Mammary epithelial cell (primary cell): ENCODE measurements at regions of chr6 and their contacts with region 1.

Region 1: DNA sequence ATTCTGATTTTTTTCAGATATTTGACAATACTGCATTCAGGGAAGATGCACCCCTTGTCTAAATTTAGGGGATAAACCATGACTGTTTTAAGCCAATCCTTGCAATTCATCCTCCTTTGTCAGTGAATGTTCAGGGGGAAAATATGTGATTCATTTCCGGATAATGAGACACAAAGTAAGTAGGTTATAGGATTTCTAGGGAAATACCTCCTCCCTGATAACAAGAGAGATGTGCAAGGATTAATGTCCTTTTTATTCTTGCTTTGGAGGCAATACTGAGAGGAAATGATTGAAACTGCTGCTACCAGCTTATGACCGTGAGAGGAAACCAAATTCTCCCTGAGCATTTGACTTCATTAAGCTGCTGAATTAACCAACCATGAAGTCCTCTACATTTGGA is 161.3 kb upstream of the EYA4 start:
- DNase-seq: no peak
- H3K4me3 ChIP-seq: no peak overlapping the region
- H3K27ac ChIP-seq: no peak overlapping the region
- H3K4me1 ChIP-seq: no peaks in the 10 kb centered on the region
- H3K27me3 ChIP-seq: no peaks in the 10 kb centered on the region
- CTCF ChIP-seq: no peak

Region 2: DNA sequence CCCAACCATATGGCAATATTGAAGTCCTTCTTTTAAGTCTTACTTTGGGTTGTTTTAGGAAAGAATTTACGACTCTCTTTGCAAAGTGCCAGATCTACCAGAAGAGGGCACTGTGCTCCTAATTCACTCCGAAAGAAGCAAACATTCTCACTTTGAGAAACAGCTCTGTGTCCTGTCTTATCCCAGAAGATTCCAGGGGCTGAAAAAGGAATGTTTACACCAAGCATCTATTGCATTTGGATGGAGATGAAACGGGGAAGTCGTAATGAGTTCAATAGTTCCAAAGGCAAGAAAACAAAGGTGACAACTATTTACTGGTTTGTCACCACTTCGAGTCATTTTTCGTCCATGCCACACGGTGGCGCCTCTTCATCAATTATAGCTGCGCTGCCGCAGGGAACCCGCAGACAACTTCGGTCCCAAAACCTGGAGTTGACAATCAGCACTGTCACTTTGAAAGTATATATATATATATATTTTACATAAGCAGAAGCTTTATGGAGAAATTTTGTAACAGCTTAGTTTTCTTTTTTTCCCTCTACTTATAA is 800.2 kb before region 1 on chr6:
- CTCF ChIA-PET with region 1: no interaction called
- dilution Hi-C with region 1: no loop called
- in situ Hi-C with region 1: no loop called
- intact Hi-C with region 1: no loop called
- DNase-seq: peak; percentile 53
- H3K4me3 ChIP-seq: peak overlapping the region; percentile 35 to 56 (median 53)
- H3K27ac ChIP-seq: no peak overlapping the region
- H3K4me1 ChIP-seq: no peaks in the 10 kb centered on the region
- H3K27me3 ChIP-seq: no peaks in the 10 kb centered on the region
- CTCF ChIP-seq: peak; percentile 76 to 81

Region 3: GRCh38 chr6:132320007-132320406 is 759.9 kb before region 1 on chr6:
- CTCF ChIA-PET with region 1: no interaction called
- dilution Hi-C with region 1: no loop called
- in situ Hi-C with region 1: no loop called
- intact Hi-C with region 1: no loop called
- DNase-seq: peak; percentile 30
- H3K4me3 ChIP-seq: no peak overlapping the region
- H3K27ac ChIP-seq: no peak overlapping the region
- H3K4me1 ChIP-seq: no peaks in the 10 kb centered on the region
- H3K27me3 ChIP-seq: no peaks in the 10 kb centered on the region
- CTCF ChIP-seq: no peak

Region 4: DNA sequence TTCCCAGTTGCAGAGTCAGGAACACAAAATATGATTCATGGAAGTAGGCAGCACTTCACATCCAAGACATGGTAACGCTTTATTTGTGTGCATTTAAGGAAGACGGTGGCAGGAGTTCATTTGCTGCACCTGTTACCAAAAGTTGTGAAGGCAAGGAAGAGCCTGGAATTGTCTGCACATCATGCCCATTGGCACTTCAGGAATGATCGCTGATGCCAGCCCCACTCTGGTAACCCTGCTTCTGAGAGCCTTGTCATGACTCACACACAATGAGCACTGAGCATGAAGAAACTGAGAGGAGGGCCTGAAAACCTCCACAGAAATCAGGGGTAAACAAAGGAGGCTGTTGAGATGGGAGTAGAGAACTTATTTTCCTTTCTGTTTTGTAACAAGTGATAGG is 84.5 kb before region 1 on chr6:
- CTCF ChIA-PET with region 1: no interaction called
- dilution Hi-C with region 1: loop called (anchors 5 kb)
- in situ Hi-C with region 1: no loop called
- intact Hi-C with region 1: no loop called
- DNase-seq: no peak
- H3K4me3 ChIP-seq: no peak overlapping the region
- H3K27ac ChIP-seq: no peak overlapping the region
- H3K4me1 ChIP-seq: no peaks in the 10 kb centered on the region
- H3K27me3 ChIP-seq: peaks cover 3% of the 10 kb centered on the region
- CTCF ChIP-seq: no peak

Region 5: GRCh38 chr6:133062077-133062476 is 17.8 kb before region 1 on chr6:
- CTCF ChIA-PET with region 1: no interaction called
- dilution Hi-C with region 1: no loop called
- in situ Hi-C with region 1: no loop called
- intact Hi-C with region 1: no loop called
- DNase-seq: no peak
- H3K4me3 ChIP-seq: no peak overlapping the region
- H3K27ac ChIP-seq: no peak overlapping the region
- H3K4me1 ChIP-seq: no peaks in the 10 kb centered on the region
- H3K27me3 ChIP-seq: peaks cover 4% of the 10 kb centered on the region
- CTCF ChIP-seq: no peak

Region 6: GRCh38 chr6:133341607-133342158 is 261.8 kb after region 1 on chr6:
- CTCF ChIA-PET with region 1: no interaction called
- dilution Hi-C with region 1: no loop called
- in situ Hi-C with region 1: no loop called
- intact Hi-C with region 1: no loop called
- DNase-seq: no peak
- H3K4me3 ChIP-seq: no peak overlapping the region
- H3K27ac ChIP-seq: no peak overlapping the region
- H3K4me1 ChIP-seq: peaks cover 3% of the 10 kb centered on the region
- H3K27me3 ChIP-seq: no peaks in the 10 kb centered on the region
- CTCF ChIP-seq: no peak